ENCODE measurements at regions of chr3 and their contacts with region 1.

Region 1: DNA sequence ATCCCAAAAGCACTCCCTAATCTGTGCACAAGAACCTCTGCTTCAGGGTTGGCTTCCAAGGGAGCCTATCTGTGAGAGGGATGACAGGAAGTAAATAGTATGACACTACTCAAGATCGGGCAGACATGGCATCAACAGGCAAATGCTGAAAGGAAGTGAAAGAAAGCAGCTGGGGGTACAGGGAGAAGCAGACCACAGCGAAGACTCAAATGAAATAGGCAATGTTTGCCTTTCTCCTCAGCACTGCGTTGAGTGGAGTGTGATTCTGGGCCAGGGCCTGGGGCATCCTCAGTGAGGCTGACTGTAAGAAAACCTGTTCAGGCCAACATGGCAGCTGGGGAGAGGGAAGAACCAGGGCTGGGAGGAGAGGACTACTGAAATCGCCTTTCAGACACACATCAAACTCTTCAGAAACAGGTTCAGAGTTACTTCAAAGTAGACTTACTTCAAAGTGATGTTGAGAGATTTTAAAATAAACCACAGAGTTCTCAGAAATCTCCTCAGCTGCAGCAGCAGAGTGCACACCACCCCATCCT is 96.6 kb downstream of the SLC9A9 start:
- DNase-seq: peak; percentile 63
- ATAC-seq: peak; percentile 88
- H3K4me3 Mint-ChIP-seq: peak overlapping the region; percentile 41
- H3K27ac Mint-ChIP-seq: peak overlapping the region; percentile 95
- H3K4me1 Mint-ChIP-seq: peaks cover 20% of the 10 kb centered on the region
- H3K27me3 Mint-ChIP-seq: no peaks in the 10 kb centered on the region

Region 2: DNA sequence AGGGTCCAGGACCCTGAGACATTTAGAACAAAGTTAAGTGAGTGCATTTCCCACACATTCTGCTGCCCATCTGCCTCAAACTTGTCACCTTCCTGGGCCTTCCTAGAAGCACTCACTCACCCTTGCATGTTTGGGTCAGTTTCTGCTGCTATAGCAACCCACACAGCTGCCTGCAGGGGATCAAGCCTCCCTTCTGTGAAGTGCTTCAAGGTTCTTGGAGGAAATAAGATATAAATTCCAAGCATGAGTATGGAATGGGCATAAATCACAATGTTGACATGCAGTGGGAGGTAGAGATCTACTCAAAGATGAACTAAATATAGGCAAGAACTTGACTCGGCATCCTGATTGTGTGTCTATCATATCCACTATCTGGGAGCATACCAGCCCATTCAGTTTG is 43.9 kb before region 1 on chr3:
- POLR2A ChIA-PET with region 1: no interaction called
- DNase-seq: no peak
- ATAC-seq: no peak
- H3K4me3 Mint-ChIP-seq: no peak overlapping the region
- H3K27ac Mint-ChIP-seq: no peak overlapping the region
- H3K4me1 Mint-ChIP-seq: peaks cover 2% of the 10 kb centered on the region
- H3K27me3 Mint-ChIP-seq: no peaks in the 10 kb centered on the region

Region 3: GRCh38 chr3:143847787-143848631 is 96.3 kb after region 1 on chr3 and contains the start of gene SLC9A9:
- POLR2A ChIA-PET with region 1: interaction called, 11 read pairs
- DNase-seq: peak; percentile 31
- ATAC-seq: peak; percentile 94
- H3K4me3 Mint-ChIP-seq: peak within 1 kb of the TSS; percentile 89
- H3K27ac Mint-ChIP-seq: peak within 1 kb of the TSS; percentile 90
- H3K4me1 Mint-ChIP-seq: peaks cover 21% of the 10 kb centered on the region
- H3K27me3 Mint-ChIP-seq: peaks cover 3% of the 10 kb centered on the region
- total RNA-seq, gene SLC9A9: 9.9 to 13.2 TPM

Measured in activated naive CD8-positive, alpha-beta T cell treated with anti-CD3 and anti-CD28 coated beads, Interleukin-2, amount 10 ng/mL, durations not matched to agents 7 days and 5 days (primary cell).